ENCODE measurements at regions of chr11 and their contacts with region 1.

Region 1: DNA sequence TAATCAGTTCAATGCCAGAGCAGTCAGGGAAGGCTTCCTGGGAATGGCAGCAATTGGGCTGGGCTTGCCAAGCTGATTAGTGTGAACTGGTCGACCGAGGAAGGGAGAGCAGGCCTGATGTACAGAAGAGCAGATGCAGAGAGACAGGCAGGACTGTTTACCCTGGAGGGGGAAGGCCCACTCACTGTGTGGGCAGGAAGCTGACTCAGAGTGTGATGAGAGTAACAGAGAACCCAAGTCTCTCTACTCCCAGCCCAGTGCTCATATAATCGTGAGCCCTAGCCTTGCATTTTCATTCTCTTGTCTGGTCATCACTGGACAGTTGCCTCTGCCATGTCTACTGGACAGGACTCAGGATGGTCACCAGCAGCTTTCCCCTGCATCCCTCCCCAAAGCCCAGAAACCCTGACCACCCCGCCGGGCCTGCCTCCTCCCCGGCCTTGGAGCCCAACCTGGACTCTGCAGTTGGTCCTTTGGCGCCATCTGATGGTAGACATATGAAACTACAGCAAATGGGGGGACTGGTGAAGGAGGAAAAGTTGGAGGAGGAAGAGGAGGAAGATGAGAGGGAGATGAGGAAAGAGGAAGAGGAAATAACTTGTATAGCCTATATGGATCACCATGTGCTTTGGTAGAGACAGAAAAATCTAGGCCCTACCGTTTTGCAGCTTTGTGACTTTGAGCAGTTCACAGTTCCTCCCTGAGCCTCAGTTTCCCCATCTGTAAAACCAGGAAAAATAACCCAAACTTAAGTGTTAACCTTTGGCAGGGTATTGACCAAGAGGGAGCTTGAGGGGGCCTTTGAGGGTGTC is 43.4 kb upstream of the PRDM11 start:
- DNase-seq: peak in 1 of 2 experiments; percentile 68
- H3K4me3 ChIP-seq: no peak overlapping the region
- H3K4me3 Mint-ChIP-seq: no peak overlapping the region
- H3K27ac Mint-ChIP-seq: no peak overlapping the region
- H3K4me1 ChIP-seq: peaks cover 4% of the 10 kb centered on the region; the same call in 1 of the 2 replicates
- H3K4me1 Mint-ChIP-seq: no peaks in the 10 kb centered on the region
- H3K27me3 ChIP-seq: no peaks in the 10 kb centered on the region
- H3K27me3 Mint-ChIP-seq: peaks cover 21% of the 10 kb centered on the region
- CTCF ChIP-seq: peak; percentile 92 to 96

Region 2: GRCh38 chr11:44893846-44894617 is 209.0 kb before region 1 on chr11:
- CTCF ChIA-PET with region 1: no interaction called
- POLR2A ChIA-PET with region 1: no interaction called
- intact Hi-C with region 1: no loop called
- DNase-seq: peak; percentile 59 to 72
- H3K4me3 ChIP-seq: no peak overlapping the region
- H3K4me3 Mint-ChIP-seq: no peak overlapping the region
- H3K27ac Mint-ChIP-seq: no peak overlapping the region
- H3K4me1 ChIP-seq: no peaks in the 10 kb centered on the region
- H3K4me1 Mint-ChIP-seq: no peaks in the 10 kb centered on the region
- H3K27me3 ChIP-seq: no peaks in the 10 kb centered on the region
- H3K27me3 Mint-ChIP-seq: peaks cover 7% of the 10 kb centered on the region
- CTCF ChIP-seq: peak; percentile 87 to 94

Region 3: DNA sequence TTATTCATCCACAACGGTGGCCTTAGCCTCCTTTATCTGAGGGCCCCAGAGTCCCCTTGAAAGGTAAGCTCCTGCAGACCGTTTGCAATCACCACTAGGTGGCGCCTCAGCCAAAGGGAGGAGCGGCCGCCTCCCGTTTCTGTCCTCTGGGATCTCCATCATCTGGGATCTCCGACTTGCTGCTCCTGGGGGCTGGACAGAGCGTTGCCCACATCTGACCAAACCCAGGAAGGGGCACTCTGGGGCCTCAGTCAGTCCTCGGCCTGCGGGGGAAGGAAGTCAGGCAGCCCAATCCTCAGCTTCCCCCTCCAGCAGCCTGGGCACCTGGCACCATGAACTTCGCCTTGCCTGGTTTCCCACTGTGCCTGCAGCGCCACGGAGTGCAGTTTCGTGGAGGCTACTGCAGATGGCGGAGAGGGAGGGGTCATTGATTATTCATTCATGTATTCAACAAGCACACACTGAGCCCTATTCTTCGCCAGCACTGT is 175.8 kb before region 1 on chr11:
- CTCF ChIA-PET with region 1: interaction called, 54 read pairs
- POLR2A ChIA-PET with region 1: no interaction called
- intact Hi-C with region 1: loop called (anchors 1 kb)
- DNase-seq: peak; percentile 65 to 75
- H3K4me3 ChIP-seq: no peak overlapping the region
- H3K4me3 Mint-ChIP-seq: no peak overlapping the region
- H3K27ac Mint-ChIP-seq: no peak overlapping the region
- H3K4me1 ChIP-seq: peaks cover 17% of the 10 kb centered on the region
- H3K4me1 Mint-ChIP-seq: peaks cover 12% of the 10 kb centered on the region
- H3K27me3 ChIP-seq: no peaks in the 10 kb centered on the region
- H3K27me3 Mint-ChIP-seq: no peaks in the 10 kb centered on the region
- CTCF ChIP-seq: peak; percentile 88 to 89

Region 4: DNA sequence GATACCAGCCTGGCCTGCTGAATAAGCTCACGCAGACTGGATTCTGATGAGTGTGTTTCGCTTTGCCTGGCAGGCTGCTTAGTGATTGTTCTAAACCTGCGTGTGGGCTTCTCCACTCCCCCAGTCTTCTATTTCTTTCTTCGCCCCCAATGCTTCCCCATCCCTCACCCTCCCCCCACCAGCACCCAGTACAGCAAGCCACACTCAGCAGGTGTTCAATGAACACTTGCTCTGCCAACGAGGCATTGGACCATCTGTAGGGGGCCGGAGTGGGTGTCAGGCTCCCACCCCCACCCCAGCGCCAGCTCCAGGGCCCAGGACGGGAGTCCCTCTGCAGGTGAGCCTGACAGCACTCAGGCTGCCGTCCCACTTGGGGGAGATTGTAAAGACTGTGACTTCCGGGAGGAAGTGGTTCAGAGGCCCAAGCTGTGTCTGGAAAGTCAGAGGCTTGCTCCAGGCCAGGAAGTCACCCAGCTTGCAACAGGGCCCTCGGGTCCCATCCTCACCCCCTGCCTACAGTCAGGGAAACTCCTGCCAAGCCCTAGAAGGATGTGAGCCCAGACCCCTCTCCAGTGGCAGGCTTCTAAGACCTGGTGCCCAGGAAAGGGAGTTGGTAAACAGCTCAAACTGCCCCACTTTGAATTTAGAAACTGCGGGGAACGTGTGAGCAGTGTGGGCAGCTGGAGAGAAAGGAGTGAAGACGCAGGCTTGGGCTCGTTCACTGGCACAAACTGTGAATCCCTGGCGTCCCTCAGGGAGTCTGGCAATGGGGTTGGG is 22.9 kb before region 1 on chr11:
- CTCF ChIA-PET with region 1: interaction called, 5 read pairs
- POLR2A ChIA-PET with region 1: no interaction called
- intact Hi-C with region 1: loop called (anchors 1 kb)
- DNase-seq: no peak
- H3K4me3 ChIP-seq: no peak overlapping the region
- H3K4me3 Mint-ChIP-seq: no peak overlapping the region
- H3K27ac Mint-ChIP-seq: no peak overlapping the region
- H3K4me1 ChIP-seq: no peaks in the 10 kb centered on the region
- H3K4me1 Mint-ChIP-seq: no peaks in the 10 kb centered on the region
- H3K27me3 ChIP-seq: no peaks in the 10 kb centered on the region
- H3K27me3 Mint-ChIP-seq: peaks cover 12% of the 10 kb centered on the region
- CTCF ChIP-seq: no peak

Measured in Caco-2 (cell line).